H1 (cell line): ENCODE measurements at regions of chr17 and their contacts with region 1.

Region 1: GRCh38 chr17:79707931-79708891 is 22.5 kb upstream of the ENPP7 start:
- DNase-seq: peak in 1 of 2 experiments; percentile 92
- H3K4me3 ChIP-seq: peak overlapping the region in 2 of 4 experiments; percentile 2 to 48; a peak in 2 of 8 replicates
- H3K27ac ChIP-seq: no peak overlapping the region
- H3K4me1 ChIP-seq: peaks cover 0 to 13% (median 3%) of the 10 kb centered on the region in 4 experiments; a peak in 5 of 7 replicates
- H3K27me3 ChIP-seq: no peaks in the 10 kb centered on the region
- CTCF ChIP-seq: peak; percentile 70 to 75 (median 73)
- EP300 ChIP-seq: no peak
- POLR2A ChIP-seq: no peak
- RAD21 ChIP-seq: peak; percentile 89 to 90

Region 2: GRCh38 chr17:79603772-79604171 is 104.4 kb before region 1 on chr17:
- CTCF ChIA-PET with region 1: interaction called, 10 read pairs
- POLR2A ChIA-PET with region 1: no interaction called
- DNase-seq: no peak
- H3K4me3 ChIP-seq: no peak overlapping the region
- H3K27ac ChIP-seq: no peak overlapping the region
- H3K4me1 ChIP-seq: peaks cover 5 to 12% (median 9%) of the 10 kb centered on the region in 4 experiments
- H3K27me3 ChIP-seq: peaks cover 4 to 20% (median 16%) of the 10 kb centered on the region in 4 experiments
- CTCF ChIP-seq: no peak
- EP300 ChIP-seq: no peak
- POLR2A ChIP-seq: no peak
- RAD21 ChIP-seq: no peak

Region 3: GRCh38 chr17:79695797-79696609 is 12.2 kb before region 1 on chr17:
- CTCF ChIA-PET with region 1: interaction called, 12 read pairs
- POLR2A ChIA-PET with region 1: interaction called, 7 read pairs
- DNase-seq: no peak
- H3K4me3 ChIP-seq: no peak overlapping the region
- H3K27ac ChIP-seq: no peak overlapping the region
- H3K4me1 ChIP-seq: peaks cover 3 to 33% (median 20%) of the 10 kb centered on the region in 4 experiments
- H3K27me3 ChIP-seq: peaks cover 0 to 7% (median 0%) of the 10 kb centered on the region in 4 experiments; a peak in 3 of 7 replicates
- CTCF ChIP-seq: no peak
- EP300 ChIP-seq: no peak
- POLR2A ChIP-seq: no peak
- RAD21 ChIP-seq: no peak